Activated CD4-positive, alpha-beta memory T cell treated with anti-CD3 and anti-CD28 coated beads, Interleukin-2, amount 10 ng/mL, durations not matched to agents 7 days and 5 days (primary cell): ENCODE measurements at regions of chr12 and their contacts with region 1.

Region 1: GRCh38 chr12:54560374-54560858 is 11.0 kb downstream of the PDE1B start:
- DNase-seq: peak; percentile 90
- H3K4me3 Mint-ChIP-seq: peak overlapping the region; percentile 73
- H3K27ac Mint-ChIP-seq: peak overlapping the region; percentile 67
- H3K4me1 Mint-ChIP-seq: peaks cover 32% of the 10 kb centered on the region
- H3K27me3 Mint-ChIP-seq: no peaks in the 10 kb centered on the region

Region 2: DNA sequence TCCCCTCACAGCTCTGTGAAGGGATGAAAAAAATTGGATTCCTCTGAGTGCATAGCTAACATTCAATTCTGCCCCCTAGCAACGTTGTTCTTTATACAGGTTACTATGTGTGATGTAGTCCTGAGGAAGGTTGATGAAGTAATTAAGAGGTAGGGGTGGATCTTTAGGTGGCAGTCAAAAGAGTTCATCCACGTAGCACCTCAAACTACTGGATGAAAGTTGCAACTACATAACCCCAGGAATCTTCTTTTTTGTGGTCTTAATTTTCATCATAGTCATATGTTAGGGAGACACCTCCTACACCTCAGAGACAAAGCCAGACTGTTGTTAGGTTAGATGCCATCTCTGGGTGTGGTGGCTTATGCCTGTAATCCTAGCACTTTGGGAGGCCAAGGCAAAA is 249.4 kb before region 1 on chr12:
- CTCF ChIA-PET with region 1: no interaction called
- POLR2A ChIA-PET with region 1: no interaction called
- DNase-seq: no peak
- H3K4me3 Mint-ChIP-seq: no peak overlapping the region
- H3K27ac Mint-ChIP-seq: no peak overlapping the region
- H3K4me1 Mint-ChIP-seq: peaks cover 15% of the 10 kb centered on the region
- H3K27me3 Mint-ChIP-seq: peaks cover 10% of the 10 kb centered on the region

Region 3: GRCh38 chr12:54549774-54550451 is 10.5 kb before region 1 on chr12:
- CTCF ChIA-PET with region 1: interaction called, 3 read pairs
- POLR2A ChIA-PET with region 1: interaction called, 39 read pairs
- DNase-seq: no peak
- H3K4me3 Mint-ChIP-seq: peak overlapping the region; percentile 25
- H3K27ac Mint-ChIP-seq: no peak overlapping the region
- H3K4me1 Mint-ChIP-seq: peaks cover 9% of the 10 kb centered on the region
- H3K27me3 Mint-ChIP-seq: peaks cover 10% of the 10 kb centered on the region